A549 (cell line): ENCODE measurements at regions of chr14 and their contacts with region 1.

Region 1: DNA sequence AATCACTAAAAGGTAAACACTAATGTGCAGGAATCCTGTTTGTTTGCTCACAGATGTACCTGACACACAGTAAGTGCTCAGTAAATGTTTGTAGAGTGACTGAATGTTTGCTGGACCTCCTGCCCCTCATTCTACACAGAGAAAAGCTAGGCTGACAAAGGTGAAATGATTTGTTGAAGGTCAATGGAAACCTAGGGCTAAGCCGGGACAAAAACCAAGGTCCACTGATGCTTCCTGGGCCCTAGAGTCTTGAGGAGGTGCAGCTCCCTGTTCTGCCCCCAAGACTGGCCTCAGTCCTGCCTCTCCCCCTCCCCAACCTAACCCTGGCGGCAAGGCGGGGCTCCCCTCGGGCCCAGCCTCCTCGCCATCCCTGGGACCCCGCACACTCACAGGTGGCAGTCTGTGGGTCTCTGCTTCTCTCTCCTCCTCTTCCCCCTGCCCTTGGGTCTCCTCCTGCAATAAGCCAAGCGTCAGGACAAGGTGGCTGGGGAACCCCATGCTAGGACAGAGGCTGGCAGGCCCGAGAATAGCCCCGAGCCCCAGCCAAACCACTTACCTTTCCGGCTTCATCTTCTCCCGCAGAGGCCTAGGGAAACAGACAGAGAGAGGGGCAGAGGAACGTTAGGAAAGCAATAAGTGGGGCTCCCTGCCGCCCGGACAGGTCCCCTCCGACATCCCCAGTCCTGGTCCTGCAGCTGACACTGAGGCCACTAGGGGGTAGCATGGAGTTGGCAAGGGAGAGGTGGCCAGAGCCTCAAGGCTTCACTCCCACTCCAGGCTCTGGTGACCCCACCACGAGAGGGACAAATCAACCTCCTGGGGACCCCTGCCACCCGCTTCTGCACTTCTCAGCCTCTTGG is 9.3 kb downstream of the PGF start:
- DNase-seq: peak; percentile 68 to 95
- ATAC-seq: peak; percentile 80 to 92
- H3K4me3 ChIP-seq: no peak overlapping the region
- H3K27ac ChIP-seq: peak overlapping the region; percentile 37 to 65; a peak in 4 of 6 replicates
- H3K4me1 ChIP-seq: peaks cover 19% of the 10 kb centered on the region
- CTCF ChIP-seq: peak; percentile 83
- EP300 ChIP-seq: no peak
- POLR2A ChIP-seq: no peak
- RAD21 ChIP-seq: peak; percentile 81 to 83

Region 2: DNA sequence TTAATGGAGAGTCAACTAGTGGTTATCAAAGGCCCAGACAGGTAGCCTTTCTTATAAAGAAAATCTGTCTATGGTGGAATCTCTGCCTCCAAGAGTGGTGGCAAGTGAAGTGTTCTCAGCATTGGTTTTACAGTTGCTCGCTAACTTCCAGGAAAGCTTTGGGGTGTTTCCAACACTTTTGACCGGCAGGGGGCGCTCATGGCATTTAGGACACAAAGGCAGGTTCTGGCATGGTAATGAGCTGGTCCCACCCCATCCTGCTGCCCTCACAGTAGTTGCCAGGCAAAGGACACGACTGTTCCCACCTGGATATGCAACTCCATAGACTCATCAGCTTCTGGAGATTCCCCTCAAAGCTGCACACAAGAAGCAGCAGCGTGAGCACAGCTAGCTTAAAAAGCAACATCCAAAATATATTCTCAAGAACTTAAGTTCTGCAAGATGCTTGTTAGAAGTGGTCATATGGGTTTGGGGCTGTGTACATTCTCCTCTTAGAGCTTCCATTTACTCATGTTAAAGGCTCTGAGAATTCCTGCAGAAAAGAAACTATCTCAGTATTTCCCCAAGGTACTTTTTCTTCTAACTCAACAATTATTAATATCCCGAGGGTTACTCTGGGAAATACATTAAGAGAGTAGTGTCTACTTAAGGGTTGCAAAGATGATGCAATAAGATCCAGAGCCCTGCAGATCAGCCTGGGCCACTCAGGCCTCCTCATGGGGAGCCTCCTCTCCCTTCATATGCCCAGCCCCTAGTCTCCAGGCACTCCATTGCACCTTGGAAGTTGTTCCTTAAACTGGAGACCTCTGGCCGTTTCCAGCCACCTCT is 84.9 kb before region 1 on chr14:
- CTCF ChIA-PET with region 1: interaction called, 11 read pairs
- POLR2A ChIA-PET with region 1: no interaction called
- DNase-seq: peak; percentile 74 to 82
- ATAC-seq: peak; percentile 81 to 92
- H3K4me3 ChIP-seq: no peak overlapping the region
- H3K27ac ChIP-seq: no peak overlapping the region
- H3K4me1 ChIP-seq: no peaks in the 10 kb centered on the region
- CTCF ChIP-seq: peak; percentile 87
- EP300 ChIP-seq: no peak
- POLR2A ChIP-seq: no peak
- RAD21 ChIP-seq: peak; percentile 82 to 91

Region 3: DNA sequence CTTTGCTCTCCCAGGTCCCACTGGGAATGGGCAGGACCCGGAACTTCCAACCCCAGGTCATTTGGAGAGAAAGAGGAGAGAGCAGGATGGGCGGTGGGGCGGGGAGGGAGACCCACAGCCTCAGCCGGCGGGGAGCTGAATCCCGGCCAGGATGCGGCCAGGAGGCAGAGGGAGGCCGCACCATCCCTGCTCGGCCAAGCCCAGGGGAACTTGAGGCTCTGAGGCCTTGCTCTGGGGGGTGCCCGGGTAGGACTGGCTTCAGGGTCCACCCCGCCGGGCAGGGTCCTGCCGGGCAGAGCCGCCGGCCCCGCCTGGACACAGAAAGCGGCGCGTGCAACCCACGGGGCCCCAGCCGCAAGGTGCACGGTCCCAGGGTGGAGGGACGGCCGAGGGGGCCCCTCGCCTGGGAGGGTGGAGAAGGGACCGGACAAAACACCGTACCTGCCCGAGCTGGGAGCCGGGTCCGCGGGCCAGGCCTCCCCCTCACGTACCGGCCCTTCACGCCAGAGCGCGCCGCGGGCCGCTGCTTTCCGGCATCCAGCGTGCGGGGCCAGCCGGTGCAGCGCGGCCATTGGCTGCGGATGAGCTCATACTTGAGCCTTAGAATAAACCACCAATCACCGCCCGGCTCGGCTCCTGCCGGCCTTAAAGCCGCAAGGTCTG is 23.2 kb before region 1 on chr14 and contains the start of gene RPS6KL1:
- CTCF ChIA-PET with region 1: interaction called, 33 read pairs
- POLR2A ChIA-PET with region 1: no interaction called
- DNase-seq: peak; percentile 57 to 80
- ATAC-seq: peak; percentile 76 to 95
- H3K4me3 ChIP-seq: peak within 1 kb of the TSS; percentile 35
- H3K27ac ChIP-seq: peak within 1 kb of the TSS in 1 of 2 experiments; percentile 48; a peak in 2 of 6 replicates
- H3K4me1 ChIP-seq: no peaks in the 10 kb centered on the region
- CTCF ChIP-seq: no peak
- EP300 ChIP-seq: no peak
- POLR2A ChIP-seq: no peak
- RAD21 ChIP-seq: no peak
- polyA plus RNA-seq, gene RPS6KL1: 0.32 and 0.40 TPM in 2 replicates

Region 4: GRCh38 chr14:74963705-74964271 is 17.7 kb after region 1 on chr14:
- CTCF ChIA-PET with region 1: interaction called, 105 read pairs
- POLR2A ChIA-PET with region 1: no interaction called
- DNase-seq: no peak
- ATAC-seq: peak; percentile 23 to 36; a peak in 3 of 6 replicates
- H3K4me3 ChIP-seq: no peak overlapping the region
- H3K27ac ChIP-seq: no peak overlapping the region
- H3K4me1 ChIP-seq: peaks cover 5% of the 10 kb centered on the region; the same call in 1 of the 3 replicates
- CTCF ChIP-seq: no peak
- EP300 ChIP-seq: no peak
- POLR2A ChIP-seq: no peak
- RAD21 ChIP-seq: no peak

Region 5: GRCh38 chr14:75002392-75003249 is 56.6 kb after region 1 on chr14 and contains the start of gene EIF2B2:
- CTCF ChIA-PET with region 1: interaction called, 12 read pairs
- POLR2A ChIA-PET with region 1: no interaction called
- DNase-seq: peak; percentile 95
- ATAC-seq: peak; percentile 97 to 99
- H3K4me3 ChIP-seq: peak within 1 kb of the TSS; percentile 82
- H3K27ac ChIP-seq: peak within 1 kb of the TSS; percentile 81 to 90
- H3K4me1 ChIP-seq: peaks cover 8% of the 10 kb centered on the region; the same call in 2 of the 3 replicates
- CTCF ChIP-seq: no peak
- EP300 ChIP-seq: no peak
- POLR2A ChIP-seq: peak; percentile 47
- RAD21 ChIP-seq: no peak
- polyA plus RNA-seq, gene EIF2B2: 116 and 142 TPM in 2 replicates

Region 6: GRCh38 chr14:75063407-75064213 is 117.6 kb after region 1 on chr14 and contains the start of gene ACYP1:
- CTCF ChIA-PET with region 1: interaction called, 21 read pairs
- POLR2A ChIA-PET with region 1: no interaction called
- DNase-seq: peak; percentile 83 to 90
- ATAC-seq: peak; percentile 97 to 99
- H3K4me3 ChIP-seq: peak within 1 kb of the TSS; percentile 55
- H3K27ac ChIP-seq: peak within 1 kb of the TSS; percentile 64 to 87
- H3K4me1 ChIP-seq: peaks cover 19% of the 10 kb centered on the region; the same call in 2 of the 3 replicates
- CTCF ChIP-seq: no peak
- EP300 ChIP-seq: no peak
- POLR2A ChIP-seq: peak; percentile 22; the same call in 1 of the 2 replicates
- RAD21 ChIP-seq: no peak
- polyA plus RNA-seq, gene ACYP1: 26.5 and 36.7 TPM in 2 replicates